ENCODE measurements at regions of chr1 and their contacts with region 1.

Region 1: GRCh38 chr1:37038227-37039076 is 4.1 kb upstream of the GRIK3 start:
- DNase-seq: peak; percentile 29 to 83 (median 80)
- H3K4me3 ChIP-seq: peak overlapping the region in 25 of 59 donors; percentile 2 to 44 (median 26)
- H3K27ac ChIP-seq: peak overlapping the region in 20 of 59 donors; percentile 2 to 81 (median 30)
- H3K27me3 ChIP-seq: peaks cover 0 to 54% (median 19%) of the 10 kb centered on the region in 45 donors
- CTCF ChIP-seq: peak in 54 of 56 donors; percentile 39 to 76 (median 62)

Region 2: DNA sequence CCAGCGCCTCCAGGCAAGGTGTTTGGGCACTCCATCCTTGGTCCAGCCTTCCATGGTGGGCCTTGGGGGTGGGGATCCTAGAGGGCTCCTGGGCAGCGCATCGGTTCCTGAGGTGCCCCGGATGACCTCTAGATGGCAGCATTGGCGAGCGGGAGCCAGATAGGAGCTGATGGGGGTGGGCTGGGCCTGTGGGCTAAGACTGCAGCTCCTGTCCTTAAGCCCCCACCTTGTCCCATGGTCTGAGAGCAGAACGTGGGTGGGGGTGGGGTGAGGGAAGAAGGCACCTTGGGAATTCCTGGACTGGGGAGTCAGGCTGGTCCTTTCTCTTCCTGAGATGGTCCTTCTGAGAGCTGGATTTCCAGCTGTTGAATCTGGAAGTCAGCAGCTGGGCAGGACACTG is 462.3 kb before region 1 on chr1:
- intact Hi-C with region 1: loop called (anchors 2 to 10 kb)
- DNase-seq: peak in 8 of 10 donors; percentile 34 to 70 (median 50)
- H3K4me3 ChIP-seq: no peak overlapping the region
- H3K27ac ChIP-seq: no peak overlapping the region
- H3K27me3 ChIP-seq: peaks cover 0 to 41% (median 9%) of the 10 kb centered on the region in 45 donors
- CTCF ChIP-seq: peak; percentile 24 to 84 (median 73)

Region 3: DNA sequence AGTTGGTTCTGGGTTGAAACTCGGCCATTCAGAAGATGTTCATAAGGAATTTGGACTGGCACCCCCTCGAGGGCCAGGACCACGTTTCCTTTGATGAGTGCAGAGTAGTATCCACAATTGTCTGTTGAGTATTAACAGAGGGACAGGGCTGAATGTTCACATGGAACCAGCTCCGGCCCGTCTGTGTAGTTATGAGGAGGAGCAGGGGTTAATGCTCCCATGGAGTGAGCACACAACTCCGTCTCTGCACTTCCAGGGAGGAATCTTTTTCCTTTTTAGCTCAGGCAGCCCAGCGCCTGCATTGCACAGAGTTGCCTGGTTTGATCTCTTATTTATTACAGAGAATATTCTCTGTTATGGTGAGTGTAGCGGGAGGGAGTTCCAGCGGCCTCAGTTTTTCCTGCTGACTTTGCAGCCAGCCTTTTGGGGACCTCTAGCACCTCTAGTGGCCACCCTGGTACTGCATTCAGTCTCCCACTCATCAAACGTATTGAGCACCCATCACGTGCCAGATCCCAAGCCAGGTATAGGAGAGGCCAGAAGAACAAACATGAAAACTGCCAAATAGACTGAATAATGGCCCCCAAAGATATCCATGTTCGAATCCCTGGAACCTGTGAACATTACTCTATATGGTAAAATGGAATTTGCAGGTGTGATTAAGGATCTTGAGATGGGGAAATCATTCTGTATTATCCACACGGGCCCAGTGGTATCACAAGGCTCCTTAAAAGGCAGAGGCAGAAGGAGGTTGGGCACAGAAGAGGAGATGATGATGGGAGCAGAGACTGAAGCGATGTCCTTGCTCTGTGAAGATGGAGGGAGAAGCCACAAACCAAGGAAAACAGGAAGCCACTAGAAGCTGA is 388.0 kb before region 1 on chr1:
- intact Hi-C with region 1: loop called (anchors 2 to 5 kb)
- DNase-seq: peak; percentile 39 to 84 (median 68)
- H3K4me3 ChIP-seq: peak overlapping the region in 2 of 59 donors; percentile 12 to 19
- H3K27ac ChIP-seq: no peak overlapping the region
- H3K27me3 ChIP-seq: peaks cover 0 to 15% (median 0%) of the 10 kb centered on the region in 45 donors
- CTCF ChIP-seq: peak; percentile 52 to 94 (median 88)

Region 4: GRCh38 chr1:36864182-36864822 is 174.2 kb before region 1 on chr1:
- intact Hi-C with region 1: loop called in 1 of 2 experiments (anchors 10 kb)
- DNase-seq: peak in 2 of 10 donors; percentile 29 to 32
- H3K4me3 ChIP-seq: no peak overlapping the region
- H3K27ac ChIP-seq: peak overlapping the region in 1 of 59 donors; percentile 32
- H3K27me3 ChIP-seq: peaks cover 0 to 9% (median 0%) of the 10 kb centered on the region in 45 donors
- CTCF ChIP-seq: peak in 48 of 56 donors; percentile 9 to 56 (median 38)

Region 5: DNA sequence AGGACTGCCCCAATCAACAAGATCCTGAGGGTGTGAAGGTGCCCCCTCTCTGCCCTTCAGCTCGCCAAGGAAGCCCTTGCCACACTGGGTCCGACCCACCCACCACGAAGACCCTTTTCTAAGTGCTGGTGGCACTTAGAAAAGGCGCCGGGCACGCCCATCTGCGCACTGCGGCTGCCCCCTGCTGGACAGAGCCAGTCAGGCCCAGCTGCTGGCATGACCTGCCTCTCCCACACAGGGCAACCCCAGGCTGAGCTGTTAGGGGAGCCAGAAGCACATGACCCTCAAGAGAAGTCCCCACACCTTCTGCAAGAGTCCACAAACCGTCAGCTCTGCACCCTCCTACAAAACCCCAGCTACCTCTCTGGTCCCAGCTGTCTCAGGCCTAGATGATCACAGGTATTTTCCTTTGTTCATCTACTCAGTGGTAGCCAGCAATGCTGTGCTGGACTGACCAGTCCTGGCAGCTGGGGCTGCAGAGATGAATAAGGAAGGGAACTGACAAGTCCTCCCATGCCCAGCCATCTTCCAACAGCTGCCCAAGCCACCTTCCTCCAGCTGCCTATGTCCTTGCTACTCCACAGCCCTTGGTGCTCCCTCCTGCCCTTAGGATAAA is 395.9 kb after region 1 on chr1:
- intact Hi-C with region 1: loop called (anchors 2 to 10 kb)
- DNase-seq: peak; percentile 61 to 86 (median 77)
- H3K4me3 ChIP-seq: no peak overlapping the region
- H3K27ac ChIP-seq: no peak overlapping the region
- H3K27me3 ChIP-seq: peaks cover 0 to 11% (median 0%) of the 10 kb centered on the region in 45 donors
- CTCF ChIP-seq: peak; percentile 85 to 99 (median 96)

Measured in dorsolateral prefrontal cortex (tissue), 120 donors.